K562 (cell line): ENCODE measurements at regions of chr13 and their contacts with region 1.

Region 1: GRCh38 chr13:77492982-77493381 is 42.5 kb upstream of the SCEL start:
- DNase-seq: no peak
- ATAC-seq: peak; percentile 56; the same call in 1 of the 3 replicates
- H3K4me3 ChIP-seq: no peak overlapping the region
- H3K27ac ChIP-seq: no peak overlapping the region
- H3K4me1 ChIP-seq: no peaks in the 10 kb centered on the region
- H3K27me3 ChIP-seq: no peaks in the 10 kb centered on the region; a peak in 1 of 5 replicates
- CTCF ChIP-seq: peak; percentile 7 to 34 (median 26); a peak in 3 of 6 replicates
- EP300 ChIP-seq: no peak
- POLR2A ChIP-seq: no peak
- RAD21 ChIP-seq: peak in 1 of 2 experiments; percentile 39; a peak in 1 of 4 replicates

Region 2: GRCh38 chr13:77099415-77099814 is 393.6 kb before region 1 on chr13:
- CTCF ChIA-PET with region 1: no interaction called
- POLR2A ChIA-PET with region 1: no interaction called
- in situ Hi-C with region 1: no loop called
- intact Hi-C with region 1: no loop called
- DNase-seq: no peak
- ATAC-seq: no peak
- H3K4me3 ChIP-seq: no peak overlapping the region
- H3K27ac ChIP-seq: no peak overlapping the region
- H3K4me1 ChIP-seq: no peaks in the 10 kb centered on the region
- H3K27me3 ChIP-seq: no peaks in the 10 kb centered on the region
- CTCF ChIP-seq: no peak
- EP300 ChIP-seq: no peak
- POLR2A ChIP-seq: no peak
- RAD21 ChIP-seq: no peak

Region 3: GRCh38 chr13:77565635-77566034 is 72.7 kb after region 1 on chr13:
- CTCF ChIA-PET with region 1: no interaction called
- POLR2A ChIA-PET with region 1: no interaction called
- in situ Hi-C with region 1: no loop called
- intact Hi-C with region 1: loop called (anchors 10 kb)
- DNase-seq: peak in 3 of 4 experiments; percentile 5 to 6 (median 5)
- ATAC-seq: peak; percentile 61; the same call in 1 of the 3 replicates
- H3K4me3 ChIP-seq: no peak overlapping the region
- H3K27ac ChIP-seq: no peak overlapping the region
- H3K4me1 ChIP-seq: no peaks in the 10 kb centered on the region
- H3K27me3 ChIP-seq: no peaks in the 10 kb centered on the region; a peak in 1 of 5 replicates
- CTCF ChIP-seq: peak in 1 of 3 experiments; percentile 44; a peak in 2 of 6 replicates
- EP300 ChIP-seq: no peak
- POLR2A ChIP-seq: no peak
- RAD21 ChIP-seq: peak; percentile 19 to 56; a peak in 2 of 4 replicates

Region 4: DNA sequence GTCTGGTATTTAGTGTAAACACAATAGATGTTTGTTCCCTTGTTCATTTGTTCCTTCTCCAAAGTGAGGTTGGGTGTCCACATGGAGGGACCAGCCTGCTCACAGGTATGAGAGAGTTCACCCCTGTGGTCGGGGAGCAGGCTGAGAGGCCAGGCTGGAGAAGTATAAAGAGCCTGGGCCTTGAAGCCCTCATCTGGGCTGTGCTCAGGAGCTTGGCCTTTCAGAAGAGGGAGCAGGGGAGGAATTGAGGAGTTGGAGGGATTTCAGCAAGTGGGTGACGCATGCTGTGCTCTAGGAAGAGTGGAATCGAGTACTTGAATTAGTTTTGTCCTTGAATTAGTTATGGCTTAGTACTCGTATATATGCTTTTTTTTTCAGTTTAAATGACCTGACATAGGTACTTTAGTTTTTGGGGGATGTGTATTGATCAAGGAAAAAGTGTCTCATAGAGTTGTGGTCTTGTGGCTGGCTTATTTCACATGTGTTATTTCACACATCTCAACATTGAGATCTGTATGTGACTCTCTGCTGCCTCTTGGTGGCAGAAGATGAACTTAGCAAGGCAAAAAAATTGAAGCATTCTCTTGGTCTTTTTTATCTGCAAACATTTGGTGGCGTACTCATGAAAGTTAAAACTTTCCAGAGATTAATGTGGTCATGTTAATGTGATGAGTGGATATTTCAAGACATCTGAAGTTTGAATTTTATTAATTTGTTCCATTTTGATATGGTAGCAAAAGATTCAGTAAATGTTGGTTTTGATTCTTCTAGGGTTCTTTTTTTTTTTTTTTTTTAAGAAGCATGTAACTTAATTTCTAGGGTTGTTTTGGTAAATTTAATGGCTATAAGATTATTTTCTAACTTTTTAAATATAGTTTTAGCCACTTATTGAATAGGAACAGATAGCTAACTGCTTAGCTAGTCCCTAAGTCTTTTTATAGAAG is 258.8 kb after region 1 on chr13:
- CTCF ChIA-PET with region 1: no interaction called
- POLR2A ChIA-PET with region 1: no interaction called
- in situ Hi-C with region 1: no loop called
- intact Hi-C with region 1: loop called (anchors 10 kb)
- DNase-seq: peak; percentile 21 to 35 (median 24)
- ATAC-seq: peak; percentile 73
- H3K4me3 ChIP-seq: no peak overlapping the region
- H3K27ac ChIP-seq: no peak overlapping the region
- H3K4me1 ChIP-seq: no peaks in the 10 kb centered on the region
- H3K27me3 ChIP-seq: no peaks in the 10 kb centered on the region
- CTCF ChIP-seq: peak; percentile 42 to 63 (median 48); a peak in 4 of 6 replicates
- EP300 ChIP-seq: no peak
- POLR2A ChIP-seq: no peak
- RAD21 ChIP-seq: peak; percentile 43 to 56